A549 (cell line): ENCODE measurements at regions of chr19 and their contacts with region 1.

Region 1: GRCh38 chr19:18521885-18522624 is at the start of gene ELL:
- DNase-seq: peak; percentile 88 to 100
- ATAC-seq: peak; percentile 88 to 91
- H3K4me3 ChIP-seq: peak within 1 kb of the TSS; percentile 100
- H3K27ac ChIP-seq: peak within 1 kb of the TSS; percentile 96 to 97
- H3K4me1 ChIP-seq: peaks cover 9% of the 10 kb centered on the region
- CTCF ChIP-seq: no peak
- EP300 ChIP-seq: no peak
- POLR2A ChIP-seq: peak; percentile 89
- RAD21 ChIP-seq: no peak
- polyA plus RNA-seq, gene ELL: 1.1 and 1.6 TPM in 2 replicates

Region 2: DNA sequence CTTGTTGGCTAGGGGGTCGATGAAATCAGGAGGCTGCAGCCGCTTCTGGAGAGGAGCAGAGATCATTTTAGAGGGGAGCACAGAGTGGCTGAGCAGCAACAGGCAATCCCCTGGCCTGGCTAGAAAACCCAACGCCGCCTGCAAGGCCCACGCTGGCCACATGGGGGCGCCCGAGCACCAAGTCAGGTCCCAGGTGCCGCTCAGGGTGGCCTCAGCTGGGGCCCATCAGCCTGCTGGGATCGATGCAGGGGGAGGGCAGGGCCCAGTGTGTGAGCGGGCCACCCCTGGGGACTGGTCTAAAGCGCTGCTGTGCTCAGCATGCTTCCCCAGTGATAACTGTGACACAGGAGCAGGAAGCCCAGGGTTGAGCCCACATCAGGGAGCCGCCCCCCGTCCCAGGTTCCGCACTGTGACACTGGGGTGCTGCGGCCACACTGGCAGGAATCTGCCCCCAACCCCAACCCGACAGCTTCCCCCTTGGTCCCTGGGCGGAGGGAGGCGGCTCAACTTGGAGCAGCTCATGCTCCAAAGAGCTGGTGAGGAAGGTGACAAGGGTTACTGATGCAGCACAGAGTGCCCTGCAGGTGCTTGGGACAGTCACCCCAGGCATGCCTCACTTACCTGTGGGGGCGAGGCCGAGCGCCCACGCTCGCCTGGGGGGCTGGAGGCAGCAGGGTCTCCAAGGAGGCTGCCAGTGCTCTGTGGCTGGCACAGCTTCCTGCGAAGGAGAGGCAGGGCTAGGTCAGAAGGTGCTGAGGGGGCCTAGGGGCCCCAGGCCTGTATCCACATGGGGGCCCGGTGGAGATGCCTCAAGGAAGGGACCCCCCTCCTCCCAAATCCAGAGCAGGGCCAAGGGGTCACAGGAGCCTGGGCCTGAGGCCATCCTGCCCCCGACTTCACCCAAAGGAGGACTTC is 70.9 kb before region 1 on chr19:
- CTCF ChIA-PET with region 1: interaction called, 10 read pairs
- POLR2A ChIA-PET with region 1: no interaction called
- DNase-seq: peak in 1 of 2 experiments; percentile 64
- ATAC-seq: peak; percentile 79 to 92
- H3K4me3 ChIP-seq: no peak overlapping the region
- H3K27ac ChIP-seq: peak overlapping the region in 1 of 2 experiments; percentile 48; a peak in 1 of 6 replicates
- H3K4me1 ChIP-seq: peaks cover 11% of the 10 kb centered on the region
- CTCF ChIP-seq: peak; percentile 77
- EP300 ChIP-seq: no peak
- POLR2A ChIP-seq: no peak
- RAD21 ChIP-seq: peak; percentile 80

Region 3: GRCh38 chr19:18469069-18469846 is 52.8 kb before region 1 on chr19:
- CTCF ChIA-PET with region 1: interaction called, 19 read pairs
- POLR2A ChIA-PET with region 1: no interaction called
- DNase-seq: peak; percentile 48 to 81
- ATAC-seq: peak; percentile 65 to 84
- H3K4me3 ChIP-seq: no peak overlapping the region
- H3K27ac ChIP-seq: peak overlapping the region; percentile 75 to 92
- H3K4me1 ChIP-seq: peaks cover 49% of the 10 kb centered on the region
- CTCF ChIP-seq: peak; percentile 72
- EP300 ChIP-seq: no peak
- POLR2A ChIP-seq: no peak
- RAD21 ChIP-seq: peak; percentile 38 to 42; a peak in 3 of 5 replicates

Region 4: GRCh38 chr19:18494267-18494607 is 27.8 kb before region 1 on chr19:
- CTCF ChIA-PET with region 1: interaction called, 15 read pairs
- POLR2A ChIA-PET with region 1: no interaction called
- DNase-seq: no peak
- ATAC-seq: no peak
- H3K4me3 ChIP-seq: no peak overlapping the region
- H3K27ac ChIP-seq: no peak overlapping the region
- H3K4me1 ChIP-seq: peaks cover 12% of the 10 kb centered on the region
- CTCF ChIP-seq: no peak
- EP300 ChIP-seq: no peak
- POLR2A ChIP-seq: no peak
- RAD21 ChIP-seq: no peak

Region 5: DNA sequence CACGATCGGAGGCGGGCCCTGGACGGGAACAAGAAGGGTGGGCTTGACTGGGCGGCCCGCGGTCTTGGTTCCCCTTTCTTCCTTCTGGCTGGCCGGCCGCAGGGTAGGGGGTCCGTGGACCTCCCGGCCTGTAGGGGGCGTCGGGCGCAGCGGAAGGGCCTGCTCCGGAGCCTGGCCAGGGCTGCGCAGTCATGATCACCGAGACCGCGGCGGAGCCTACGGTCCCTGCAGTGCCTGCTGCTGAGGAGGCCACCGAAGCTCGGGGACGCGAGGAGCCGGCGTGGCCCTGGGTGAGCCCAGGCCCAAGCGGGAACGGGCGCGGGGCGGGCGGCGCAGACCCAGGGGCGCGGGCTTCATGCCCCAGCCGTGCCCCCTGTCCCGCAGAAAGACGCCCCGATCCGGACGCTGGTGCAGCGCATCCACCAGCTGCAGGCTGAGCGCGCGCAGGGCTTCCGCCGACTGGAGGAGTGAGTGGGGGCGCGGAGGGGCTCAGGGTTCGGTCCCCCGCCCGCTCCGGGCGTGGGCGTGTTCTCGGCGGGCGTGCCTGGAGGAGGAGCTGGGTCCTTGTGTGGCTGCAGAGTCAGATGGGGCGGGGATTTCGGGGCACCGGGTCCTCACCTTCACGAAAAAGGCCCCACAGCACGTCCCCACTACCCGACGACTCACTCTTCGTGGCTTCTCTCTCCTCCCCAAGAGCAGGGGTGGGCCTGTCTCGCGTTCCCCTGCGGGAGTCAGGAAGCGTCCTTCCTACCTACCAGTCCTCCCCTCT is 66.7 kb after region 1 on chr19 and contains the start of gene REX1BD:
- CTCF ChIA-PET with region 1: interaction called, 18 read pairs
- POLR2A ChIA-PET with region 1: interaction called, 10 read pairs
- DNase-seq: peak in 1 of 2 experiments; percentile 83
- ATAC-seq: peak; percentile 75 to 85
- H3K4me3 ChIP-seq: peak within 1 kb of the TSS; percentile 96
- H3K27ac ChIP-seq: peak within 1 kb of the TSS; percentile 100
- H3K4me1 ChIP-seq: peaks cover 9% of the 10 kb centered on the region; the same call in 1 of the 3 replicates
- CTCF ChIP-seq: peak; percentile 74
- EP300 ChIP-seq: no peak
- POLR2A ChIP-seq: peak; percentile 80
- RAD21 ChIP-seq: no peak; a peak in 1 of 5 replicates
- polyA plus RNA-seq, gene REX1BD: 13.3 and 23.1 TPM in 2 replicates

Region 6: GRCh38 chr19:18919086-18919899 is 397.2 kb after region 1 on chr19 and contains the starts of genes COPE and DDX49:
- CTCF ChIA-PET with region 1: no interaction called
- POLR2A ChIA-PET with region 1: no interaction called
- DNase-seq: peak; percentile 97 to 99
- ATAC-seq: peak; percentile 97
- H3K4me3 ChIP-seq: peak within 1 kb of the TSS; percentile 91
- H3K27ac ChIP-seq: peak within 1 kb of the TSS; percentile 81 to 95
- H3K4me1 ChIP-seq: peaks cover 8% of the 10 kb centered on the region; the same call in 1 of the 3 replicates
- CTCF ChIP-seq: no peak
- EP300 ChIP-seq: no peak
- POLR2A ChIP-seq: peak; percentile 59
- RAD21 ChIP-seq: no peak
- polyA plus RNA-seq, gene COPE: 91.8 and 94.0 TPM in 2 replicates
- polyA plus RNA-seq, gene DDX49: 23.2 and 23.4 TPM in 2 replicates